Esophagus squamous epithelium (tissue), 5 donors: ENCODE measurements at regions of chr5 and their contacts with region 1.

Region 1: DNA sequence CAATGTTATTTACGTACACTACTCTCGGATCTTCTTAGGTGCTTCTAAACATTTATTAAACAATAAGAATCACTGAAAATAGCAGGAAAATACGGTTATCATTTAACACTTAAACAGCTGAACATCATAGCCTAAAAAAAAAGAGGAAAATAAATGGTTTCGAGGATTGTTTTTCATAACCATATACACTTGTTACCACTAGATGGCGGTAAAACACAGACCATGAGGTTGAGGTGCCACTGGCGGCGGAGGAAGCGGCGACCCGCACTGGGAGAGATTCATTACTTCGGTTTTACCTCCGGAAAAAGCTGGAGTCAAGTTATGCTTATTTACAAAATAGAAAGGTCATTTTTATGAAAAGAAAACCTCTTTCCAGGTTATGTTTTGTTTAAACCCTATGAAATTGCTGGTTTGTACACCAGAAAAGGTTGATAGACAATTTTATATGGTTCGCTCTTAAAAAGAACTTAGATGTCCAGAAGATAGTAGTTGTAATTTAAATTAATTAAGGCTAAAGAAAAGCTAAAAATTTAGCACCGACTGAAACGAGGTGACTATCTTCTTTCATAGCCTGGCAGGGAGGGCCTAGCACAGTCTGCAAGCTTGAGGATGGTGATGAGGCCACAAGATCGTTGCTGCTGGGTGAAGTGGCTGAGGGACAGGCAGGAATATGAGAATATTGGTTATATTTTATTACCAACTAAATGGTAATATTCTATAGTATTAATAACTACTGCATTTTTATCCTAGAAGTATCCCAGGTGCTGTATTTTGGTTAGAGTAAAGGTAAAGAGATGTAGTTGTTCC is 605.7 kb downstream of the RAB3C start:
- DNase-seq: no peak
- H3K4me3 ChIP-seq: peak overlapping the region in 3 of 4 donors; percentile 12 to 27 (median 13)
- H3K27ac ChIP-seq: peak overlapping the region in 2 of 4 donors; percentile 47 to 52
- H3K4me1 ChIP-seq: peaks cover 0 to 15% (median 0%) of the 10 kb centered on the region in 3 donors
- H3K27me3 ChIP-seq: no peaks in the 10 kb centered on the region
- CTCF ChIP-seq: peak; percentile 78 to 83 (median 80)
- POLR2A ChIP-seq: no peak

Region 2: DNA sequence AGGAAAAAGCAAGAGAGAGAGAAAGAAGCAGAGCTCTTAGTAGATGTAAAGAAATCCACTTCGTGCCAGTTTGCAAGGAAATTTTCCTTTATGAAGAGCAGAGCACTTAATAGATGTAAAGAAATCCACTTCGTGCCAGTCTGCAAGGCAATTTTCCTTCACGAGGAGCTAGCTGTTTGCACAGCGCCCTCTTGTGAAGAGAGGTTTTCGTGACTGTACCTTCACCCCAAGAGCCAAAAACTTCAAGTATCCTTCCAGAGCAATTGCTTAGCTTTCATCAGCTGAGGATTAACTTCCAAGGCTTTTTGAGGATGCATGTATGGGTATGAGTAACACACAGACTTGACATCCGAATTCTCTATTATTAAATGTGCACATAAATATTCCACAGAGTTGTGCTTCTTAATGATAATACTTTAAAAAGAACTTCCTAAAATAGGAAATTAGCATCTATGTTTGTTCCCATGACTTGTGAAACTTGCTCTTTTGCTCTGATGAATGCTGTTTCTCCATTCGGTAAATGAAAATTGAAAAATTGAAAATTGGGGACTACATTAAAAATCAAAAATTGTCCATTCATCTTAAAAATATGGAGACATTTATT is 179.3 kb after region 1 on chr5:
- intact Hi-C with region 1: loop called (anchors 10 kb)
- DNase-seq: peak; percentile 0
- H3K4me3 ChIP-seq: no peak overlapping the region
- H3K27ac ChIP-seq: no peak overlapping the region
- H3K4me1 ChIP-seq: peaks cover 0 to 4% (median 0%) of the 10 kb centered on the region in 3 donors
- H3K27me3 ChIP-seq: no peaks in the 10 kb centered on the region
- CTCF ChIP-seq: peak in 5 of 6 experiments; percentile 46 to 69 (median 53)
- POLR2A ChIP-seq: no peak